AG04449 (cell line): ENCODE measurements at regions of chr5 and their contacts with region 1.

Region 1: GRCh38 chr5:65481635-65482295 is at the start of gene ADAMTS6:
- DNase-seq: peak; percentile 90
- H3K4me3 ChIP-seq: peak within 1 kb of the TSS; percentile 72
- CTCF ChIP-seq: no peak

Region 2: GRCh38 chr5:64784451-64785025 is 697.2 kb before region 1 on chr5:
- CTCF ChIA-PET with region 1: interaction called, 11 read pairs
- POLR2A ChIA-PET with region 1: no interaction called
- DNase-seq: peak; percentile 49
- H3K4me3 ChIP-seq: no peak overlapping the region
- CTCF ChIP-seq: peak; percentile 65

Region 3: GRCh38 chr5:64826541-64826940 is 655.2 kb before region 1 on chr5:
- CTCF ChIA-PET with region 1: interaction called, 10 read pairs
- POLR2A ChIA-PET with region 1: no interaction called
- DNase-seq: no peak
- H3K4me3 ChIP-seq: no peak overlapping the region
- CTCF ChIP-seq: no peak

Region 4: DNA sequence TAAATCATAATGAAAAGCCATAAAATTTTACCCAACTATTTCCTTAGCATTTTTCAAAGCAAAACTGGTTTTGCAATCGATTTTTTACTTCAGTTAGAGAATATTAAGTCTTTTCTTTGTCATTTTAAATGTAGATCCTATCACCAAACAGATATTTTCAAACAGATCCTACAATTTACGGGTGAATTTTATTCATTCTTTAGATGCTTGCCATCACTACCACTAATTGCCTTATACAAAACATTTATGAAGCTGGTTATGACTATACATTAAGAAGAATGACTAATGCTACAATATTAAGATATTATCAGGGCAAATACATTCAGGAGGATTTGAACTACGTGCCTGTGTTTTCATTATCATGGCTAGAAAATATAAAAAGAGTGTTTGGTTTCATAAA is 516.2 kb before region 1 on chr5:
- CTCF ChIA-PET with region 1: interaction called, 87 read pairs
- POLR2A ChIA-PET with region 1: no interaction called
- DNase-seq: no peak
- H3K4me3 ChIP-seq: no peak overlapping the region
- CTCF ChIP-seq: no peak

Region 5: DNA sequence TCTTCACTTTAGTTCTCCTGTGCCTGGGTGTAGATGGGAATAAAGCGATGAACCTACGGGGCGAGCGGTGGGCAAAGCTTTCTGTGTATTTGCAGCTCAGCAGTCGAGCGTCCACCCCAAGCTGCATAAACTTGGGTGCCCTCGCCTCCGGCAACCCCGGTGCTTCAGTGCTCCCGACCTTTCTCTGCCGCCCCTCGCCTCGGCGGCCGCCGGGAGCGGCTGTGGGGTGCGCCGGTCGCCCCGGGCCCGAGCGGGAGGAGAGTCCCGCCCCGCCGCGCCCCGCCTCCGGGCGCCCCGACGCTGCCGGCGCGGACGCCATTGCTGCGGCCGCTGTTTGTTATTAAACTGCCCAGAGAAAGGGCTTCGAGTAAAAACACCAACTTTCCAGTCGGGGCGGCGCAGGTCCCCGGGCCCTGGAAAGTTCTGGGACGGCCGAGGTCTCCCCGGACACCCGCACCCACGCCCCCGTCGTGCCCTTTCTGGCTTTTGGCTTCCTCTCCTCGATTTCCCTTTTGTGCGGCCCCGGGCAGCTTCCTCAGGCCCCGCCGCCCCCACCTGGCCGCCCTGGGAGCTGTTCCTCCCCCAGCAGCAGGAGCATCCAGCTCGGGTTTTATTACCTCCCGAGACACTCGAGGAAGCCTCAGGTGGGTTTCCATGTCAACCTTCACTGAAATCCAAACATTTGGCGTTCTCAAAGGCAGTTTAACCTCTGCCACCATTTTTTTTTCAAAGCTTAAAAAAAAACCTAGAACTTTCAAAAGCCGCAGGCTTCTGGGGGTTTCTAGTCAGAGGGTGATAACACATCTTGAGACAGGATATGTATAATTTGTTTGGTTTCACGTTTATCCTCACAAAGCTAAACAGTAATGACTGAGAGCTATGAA is 378.7 kb before region 1 on chr5:
- CTCF ChIA-PET with region 1: interaction called, 18 read pairs
- POLR2A ChIA-PET with region 1: interaction called, 4 read pairs
- DNase-seq: no peak
- H3K4me3 ChIP-seq: peak overlapping the region; percentile 34
- CTCF ChIP-seq: peak; percentile 9